GM18951 (cell line): ENCODE measurements at regions of chr1 and their contacts with region 1.

Region 1: GRCh38 chr1:168603501-168604110 is 27.2 kb downstream of the XCL1 start:
- POLR2A ChIP-seq: no peak

Region 2: DNA sequence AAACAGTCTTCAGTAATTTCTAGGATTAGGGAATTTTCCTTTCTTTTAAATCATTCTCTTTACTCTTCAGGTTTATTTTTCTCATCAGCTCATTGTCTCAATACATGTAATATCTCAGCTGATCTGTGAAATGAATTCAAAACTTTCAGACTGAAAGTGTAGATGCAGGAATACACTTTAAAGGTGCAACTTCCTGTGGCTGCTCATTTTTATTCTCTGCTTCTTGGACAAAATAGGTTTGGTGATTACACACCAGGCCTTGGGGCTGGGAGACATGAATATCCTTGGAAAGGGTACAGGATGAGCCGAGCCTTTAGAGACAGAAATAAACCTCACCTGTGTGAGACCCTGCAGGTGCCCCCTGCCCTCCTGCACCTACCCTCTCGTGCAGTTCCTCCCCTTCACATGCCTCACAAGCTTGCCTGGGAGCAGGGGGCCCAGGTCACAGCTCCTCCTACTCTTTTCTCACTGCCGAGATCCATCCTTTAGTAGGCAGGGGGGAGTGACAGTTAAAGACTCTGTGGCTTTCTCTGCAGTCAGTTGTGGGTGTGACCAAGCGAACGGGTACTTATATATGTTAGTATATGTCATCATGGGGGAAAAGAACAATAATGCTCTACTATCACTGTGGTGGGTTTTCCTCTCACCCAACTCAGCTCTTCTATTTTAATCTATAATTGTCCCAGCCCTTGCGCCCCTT is 83.4 kb before region 1 on chr1:
- in situ Hi-C with region 1: no loop called
- POLR2A ChIP-seq: no peak

Region 3: DNA sequence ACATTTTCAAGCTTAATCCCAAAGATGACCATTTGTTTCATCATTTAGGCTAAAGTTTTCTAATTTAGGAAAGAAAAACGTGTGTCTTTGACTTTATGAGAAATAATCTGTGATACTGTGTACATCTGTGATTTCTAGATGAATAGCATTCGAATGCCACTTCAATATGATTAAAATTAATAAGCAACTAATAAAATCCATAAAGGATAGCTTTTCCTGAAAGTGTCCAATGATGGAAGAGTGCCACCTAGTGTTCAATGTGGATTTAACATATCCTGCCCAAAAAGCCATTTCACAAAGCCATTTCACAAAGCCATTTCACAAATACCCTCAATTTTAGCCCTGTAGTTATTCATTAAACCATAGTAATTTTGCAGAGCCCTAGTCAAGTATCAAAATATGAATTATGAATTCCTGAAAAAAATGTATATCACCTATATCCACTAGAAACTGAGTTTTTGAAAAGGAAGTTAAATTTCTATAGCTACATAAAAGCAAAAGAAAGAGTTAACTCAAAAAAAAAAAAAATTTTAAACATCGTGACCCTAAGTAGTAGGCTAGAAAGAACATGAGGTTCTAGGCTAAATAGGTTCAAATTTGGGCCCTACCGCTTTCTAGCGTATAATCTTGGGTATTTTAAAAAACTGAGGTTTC is 744.9 kb after region 1 on chr1:
- in situ Hi-C with region 1: loop called (anchors 10 kb)
- POLR2A ChIP-seq: no peak

Region 4: DNA sequence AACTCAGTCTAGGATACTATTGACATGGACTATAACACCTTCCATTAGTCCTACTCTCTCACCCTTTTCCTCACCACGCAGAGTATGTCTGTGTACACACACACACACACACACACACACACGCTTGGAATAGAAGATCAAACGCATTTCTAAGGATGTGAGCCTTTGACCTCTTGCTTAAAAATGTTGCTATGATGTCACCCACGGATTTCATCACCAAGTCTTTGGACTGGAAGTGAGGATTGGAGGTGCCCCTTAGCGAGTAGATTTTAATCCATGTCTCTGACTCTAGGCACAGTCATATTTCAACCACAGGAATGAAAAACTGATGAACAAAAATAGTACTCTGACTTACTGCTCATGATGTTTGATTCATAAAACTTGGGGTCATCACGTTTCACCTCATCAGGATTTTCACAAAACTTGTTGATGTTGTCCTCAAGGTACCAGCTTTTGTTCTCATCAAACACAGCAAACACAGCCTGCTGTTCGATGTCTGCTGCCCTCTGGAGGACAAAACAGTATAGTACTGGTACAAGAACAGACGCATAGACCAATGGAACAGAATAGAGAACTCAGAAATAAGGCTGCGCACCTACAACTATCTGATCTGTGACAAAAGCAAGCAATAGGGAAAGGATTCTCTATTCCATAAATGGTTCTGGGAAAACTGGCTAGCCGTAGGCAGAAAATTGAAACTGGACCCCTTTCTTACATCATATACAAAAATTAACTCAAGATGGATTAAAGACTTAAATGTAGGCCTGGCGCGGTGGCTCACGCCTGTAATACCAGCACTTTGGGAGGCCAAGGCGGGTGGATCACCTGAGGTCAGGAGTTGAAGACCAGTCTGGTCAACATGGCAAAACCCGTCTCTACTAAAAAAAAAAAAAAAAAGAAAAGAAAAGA is 942.7 kb after region 1 on chr1:
- in situ Hi-C with region 1: loop called (anchors 10 kb)
- POLR2A ChIP-seq: no peak